B cell (primary cell): ENCODE measurements at regions of chrX and their contacts with region 1.

Region 1: GRCh38 chrX:119729408-119730201 is 28.8 kb upstream of the SOWAHD start:
- DNase-seq: peak; percentile 77
- ATAC-seq: peak; percentile 57
- H3K4me3 ChIP-seq: no peak overlapping the region
- H3K4me3 Mint-ChIP-seq: peak overlapping the region; percentile 44
- H3K27ac ChIP-seq: no peak overlapping the region
- H3K27ac Mint-ChIP-seq: no peak overlapping the region
- H3K4me1 ChIP-seq: peaks cover 0 to 5% of the 10 kb centered on the region in 2 donors
- H3K4me1 Mint-ChIP-seq: peaks cover 6% of the 10 kb centered on the region
- H3K27me3 ChIP-seq: no peaks in the 10 kb centered on the region
- H3K27me3 Mint-ChIP-seq: no peaks in the 10 kb centered on the region
- CTCF ChIP-seq: peak; percentile 71

Region 2: GRCh38 chrX:119606280-119607015 is 123.2 kb before region 1 on chrX and contains the start of gene NKRF:
- CTCF ChIA-PET with region 1: interaction called, 25 read pairs
- POLR2A ChIA-PET with region 1: interaction called, 4 read pairs
- intact Hi-C with region 1: loop called (anchors 1 kb)
- DNase-seq: peak; percentile 94
- ATAC-seq: peak; percentile 77
- H3K4me3 ChIP-seq: peak within 1 kb of the TSS; percentile 54 to 86 (median 71)
- H3K4me3 Mint-ChIP-seq: peak within 1 kb of the TSS; percentile 97
- H3K27ac ChIP-seq: peak within 1 kb of the TSS; percentile 87 to 94
- H3K27ac Mint-ChIP-seq: peak within 1 kb of the TSS; percentile 99
- H3K4me1 ChIP-seq: peaks cover 12 to 29% of the 10 kb centered on the region in 2 donors
- H3K4me1 Mint-ChIP-seq: peaks cover 42% of the 10 kb centered on the region
- H3K27me3 ChIP-seq: no peaks in the 10 kb centered on the region
- H3K27me3 Mint-ChIP-seq: no peaks in the 10 kb centered on the region
- CTCF ChIP-seq: no peak
- total RNA-seq, gene NKRF: 16.1 and 16.2 TPM in 2 replicates

Region 3: GRCh38 chrX:119661486-119661885 is 68.1 kb before region 1 on chrX:
- CTCF ChIA-PET with region 1: interaction called, 13 read pairs
- POLR2A ChIA-PET with region 1: no interaction called
- intact Hi-C with region 1: no loop called
- DNase-seq: no peak
- ATAC-seq: no peak
- H3K4me3 ChIP-seq: no peak overlapping the region
- H3K4me3 Mint-ChIP-seq: no peak overlapping the region
- H3K27ac ChIP-seq: no peak overlapping the region
- H3K27ac Mint-ChIP-seq: peak overlapping the region; percentile 61
- H3K4me1 ChIP-seq: peaks cover 24 to 26% of the 10 kb centered on the region in 2 donors
- H3K4me1 Mint-ChIP-seq: peaks cover 33% of the 10 kb centered on the region
- H3K27me3 ChIP-seq: no peaks in the 10 kb centered on the region
- H3K27me3 Mint-ChIP-seq: no peaks in the 10 kb centered on the region
- CTCF ChIP-seq: no peak

Region 4: GRCh38 chrX:119693040-119693995 is 36.3 kb before region 1 on chrX and contains the start of gene SEPTIN6:
- CTCF ChIA-PET with region 1: interaction called, 35 read pairs
- POLR2A ChIA-PET with region 1: interaction called, 6 read pairs
- intact Hi-C with region 1: loop called (anchors 2 kb)
- DNase-seq: peak; percentile 92
- ATAC-seq: peak; percentile 66
- H3K4me3 ChIP-seq: peak within 1 kb of the TSS; percentile 69 to 78 (median 71)
- H3K4me3 Mint-ChIP-seq: peak within 1 kb of the TSS; percentile 90
- H3K27ac ChIP-seq: peak within 1 kb of the TSS; percentile 71 to 99
- H3K27ac Mint-ChIP-seq: peak within 1 kb of the TSS; percentile 91
- H3K4me1 ChIP-seq: peaks cover 68 to 77% of the 10 kb centered on the region in 2 donors
- H3K4me1 Mint-ChIP-seq: peaks cover 60% of the 10 kb centered on the region
- H3K27me3 ChIP-seq: no peaks in the 10 kb centered on the region
- H3K27me3 Mint-ChIP-seq: no peaks in the 10 kb centered on the region
- CTCF ChIP-seq: peak; percentile 6
- total RNA-seq, gene SEPTIN6: 290 and 310 TPM in 2 replicates

Region 5: DNA sequence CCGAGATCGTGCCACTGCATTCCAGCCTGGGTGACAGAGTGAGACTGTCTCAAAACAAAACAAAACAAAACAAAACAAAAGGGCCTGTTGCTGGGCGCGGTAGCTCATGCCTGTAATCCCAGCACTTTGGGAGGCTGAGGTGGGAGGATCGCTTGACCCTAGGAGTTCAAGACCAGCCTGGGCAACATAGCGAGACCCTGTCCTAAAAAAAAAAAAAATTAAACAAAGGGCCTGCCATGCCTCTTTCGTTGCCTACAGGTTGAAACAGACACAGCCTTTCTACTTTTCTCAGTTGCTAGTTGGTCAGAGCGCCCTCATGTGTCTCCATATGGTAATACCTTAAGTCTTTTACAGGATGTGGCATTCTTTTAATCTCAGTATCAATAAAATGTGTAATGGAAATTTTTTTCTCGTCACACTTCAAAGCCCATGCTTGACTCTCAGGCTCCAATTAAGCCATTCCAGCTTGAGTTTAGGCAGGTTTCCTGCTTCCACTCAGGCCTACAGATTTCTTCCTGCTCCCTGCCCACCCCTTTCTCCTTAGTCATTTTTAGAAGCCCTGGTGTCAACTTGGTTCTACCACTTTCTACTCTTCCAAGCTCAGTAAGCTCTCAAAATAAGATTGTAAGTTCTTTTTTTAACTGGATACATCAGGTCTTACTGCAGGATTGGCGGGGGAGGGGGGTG is 24.1 kb after region 1 on chrX:
- CTCF ChIA-PET with region 1: interaction called, 35 read pairs
- POLR2A ChIA-PET with region 1: no interaction called
- intact Hi-C with region 1: loop called (anchors 1 kb)
- DNase-seq: peak; percentile 69
- ATAC-seq: peak; percentile 11
- H3K4me3 ChIP-seq: no peak overlapping the region
- H3K4me3 Mint-ChIP-seq: peak overlapping the region; percentile 59
- H3K27ac ChIP-seq: peak overlapping the region; percentile 37 to 89
- H3K27ac Mint-ChIP-seq: peak overlapping the region; percentile 96
- H3K4me1 ChIP-seq: peaks cover 43 to 47% of the 10 kb centered on the region in 2 donors
- H3K4me1 Mint-ChIP-seq: peaks cover 41% of the 10 kb centered on the region
- H3K27me3 ChIP-seq: no peaks in the 10 kb centered on the region
- H3K27me3 Mint-ChIP-seq: no peaks in the 10 kb centered on the region
- CTCF ChIP-seq: peak; percentile 63